Activated CD4-positive, alpha-beta T cell treated with anti-CD3 and anti-CD28 coated beads, Interleukin-2, amount 10 ng/mL, durations not matched to agents 7 days and 5 days (primary cell): ENCODE measurements at regions of chr18 and their contacts with region 1.

Region 1: DNA sequence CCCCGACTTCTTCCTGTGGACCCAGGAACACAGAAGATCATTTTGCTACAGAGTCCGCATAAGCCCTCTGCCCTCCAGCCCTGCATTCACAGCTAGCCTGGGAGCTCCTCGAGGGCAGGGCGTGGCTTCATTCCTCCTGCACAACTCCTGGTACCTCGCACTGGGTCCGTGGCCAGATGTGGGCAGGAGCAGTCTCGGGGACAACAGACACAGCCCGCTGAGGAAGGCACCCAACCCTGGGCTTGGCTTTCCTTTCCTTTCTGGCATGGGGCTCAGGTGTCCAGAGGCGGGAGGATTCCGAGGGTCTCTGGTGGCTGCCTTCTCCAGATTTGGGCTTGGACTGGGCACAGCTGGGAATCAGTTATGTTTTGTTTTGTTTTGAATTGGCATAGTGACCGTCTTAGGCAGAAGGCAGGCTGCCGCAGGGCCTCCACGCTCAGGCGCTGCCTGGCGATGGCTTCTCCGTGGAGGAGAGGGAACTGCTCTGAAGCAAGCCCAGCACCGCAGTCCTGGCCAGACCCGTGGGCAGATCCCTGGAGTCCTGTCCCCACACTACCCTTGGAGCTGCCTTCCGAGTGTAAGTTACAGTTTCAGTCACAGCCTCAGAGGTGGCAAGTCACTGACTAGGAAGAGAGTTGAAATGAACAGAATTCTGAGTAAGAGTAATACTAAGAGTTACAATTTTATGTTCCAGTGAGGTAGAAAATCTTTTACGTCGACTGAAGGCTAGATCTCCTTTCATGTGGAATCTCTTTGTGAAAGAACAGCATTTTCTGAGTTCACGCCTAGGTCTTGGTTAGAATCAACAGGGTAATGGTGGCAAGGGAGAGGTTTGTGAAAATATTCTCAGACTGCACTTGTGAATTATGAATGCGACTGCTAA is 47.9 kb downstream of the LDLRAD4 start:
- DNase-seq: peak; percentile 28
- H3K4me3 Mint-ChIP-seq: peak overlapping the region; percentile 60
- H3K27ac Mint-ChIP-seq: peak overlapping the region; percentile 88
- H3K4me1 Mint-ChIP-seq: peaks cover 65% of the 10 kb centered on the region
- H3K27me3 Mint-ChIP-seq: no peaks in the 10 kb centered on the region

Region 2: GRCh38 chr18:12960395-12960794 is 306.1 kb before region 1 on chr18:
- CTCF ChIA-PET with region 1: no interaction called
- POLR2A ChIA-PET with region 1: no interaction called
- DNase-seq: no peak
- H3K4me3 Mint-ChIP-seq: no peak overlapping the region
- H3K27ac Mint-ChIP-seq: no peak overlapping the region
- H3K4me1 Mint-ChIP-seq: peaks cover 2% of the 10 kb centered on the region
- H3K27me3 Mint-ChIP-seq: no peaks in the 10 kb centered on the region

Region 3: GRCh38 chr18:13086906-13087305 is 179.6 kb before region 1 on chr18:
- CTCF ChIA-PET with region 1: no interaction called
- POLR2A ChIA-PET with region 1: no interaction called
- DNase-seq: no peak
- H3K4me3 Mint-ChIP-seq: no peak overlapping the region
- H3K27ac Mint-ChIP-seq: no peak overlapping the region
- H3K4me1 Mint-ChIP-seq: no peaks in the 10 kb centered on the region
- H3K27me3 Mint-ChIP-seq: no peaks in the 10 kb centered on the region

Region 4: GRCh38 chr18:13279181-13280069 is 13.0 kb after region 1 on chr18:
- CTCF ChIA-PET with region 1: interaction called, 11 read pairs
- POLR2A ChIA-PET with region 1: no interaction called
- DNase-seq: peak; percentile 12
- H3K4me3 Mint-ChIP-seq: peak overlapping the region; percentile 45
- H3K27ac Mint-ChIP-seq: peak overlapping the region; percentile 78
- H3K4me1 Mint-ChIP-seq: peaks cover 72% of the 10 kb centered on the region
- H3K27me3 Mint-ChIP-seq: no peaks in the 10 kb centered on the region

Region 5: DNA sequence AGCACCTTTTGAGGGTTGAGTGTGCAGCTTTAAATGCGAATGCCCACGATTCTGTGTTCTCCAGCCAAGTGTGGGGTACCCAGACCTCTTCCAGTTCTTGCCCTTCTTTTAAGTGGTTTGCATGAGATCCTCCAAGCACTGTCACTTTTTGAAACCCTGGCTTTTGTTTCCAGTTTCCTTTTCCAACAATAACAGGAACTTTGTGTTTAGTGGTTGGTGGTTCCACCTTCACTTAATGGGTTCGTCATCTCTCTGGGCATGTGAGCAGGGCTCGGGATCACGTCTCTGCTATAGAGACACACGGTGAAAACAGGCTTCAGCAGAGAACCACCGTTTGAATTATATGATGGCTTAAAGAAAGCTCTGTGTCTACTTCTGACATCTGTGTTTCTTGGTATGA is 149.7 kb after region 1 on chr18:
- CTCF ChIA-PET with region 1: no interaction called
- POLR2A ChIA-PET with region 1: no interaction called
- DNase-seq: no peak
- H3K4me3 Mint-ChIP-seq: no peak overlapping the region
- H3K27ac Mint-ChIP-seq: no peak overlapping the region
- H3K4me1 Mint-ChIP-seq: peaks cover 21% of the 10 kb centered on the region
- H3K27me3 Mint-ChIP-seq: no peaks in the 10 kb centered on the region